Activated B cell treated with CpG ODN at 0.5 μM for 24 hours (primary cell): ENCODE measurements at regions of chr3 and their contacts with region 1.

Region 1: GRCh38 chr3:12891985-12892839 is 50.8 kb upstream of the RPL32 start:
- DNase-seq: no peak
- ATAC-seq: peak; percentile 52
- H3K4me3 Mint-ChIP-seq: no peak overlapping the region
- H3K27ac Mint-ChIP-seq: no peak overlapping the region
- H3K4me1 Mint-ChIP-seq: peaks cover 15% of the 10 kb centered on the region
- H3K27me3 Mint-ChIP-seq: peaks cover 3% of the 10 kb centered on the region
- CTCF ChIP-seq: peak; percentile 89

Region 2: GRCh38 chr3:12706504-12707253 is 185.5 kb before region 1 on chr3:
- CTCF ChIA-PET with region 1: interaction called, 5 read pairs
- POLR2A ChIA-PET with region 1: no interaction called
- intact Hi-C with region 1: loop called (anchors 1 kb)
- DNase-seq: peak; percentile 24
- ATAC-seq: peak; percentile 98
- H3K4me3 Mint-ChIP-seq: no peak overlapping the region
- H3K27ac Mint-ChIP-seq: no peak overlapping the region
- H3K4me1 Mint-ChIP-seq: no peaks in the 10 kb centered on the region
- H3K27me3 Mint-ChIP-seq: peaks cover 3% of the 10 kb centered on the region
- CTCF ChIP-seq: no peak

Region 3: DNA sequence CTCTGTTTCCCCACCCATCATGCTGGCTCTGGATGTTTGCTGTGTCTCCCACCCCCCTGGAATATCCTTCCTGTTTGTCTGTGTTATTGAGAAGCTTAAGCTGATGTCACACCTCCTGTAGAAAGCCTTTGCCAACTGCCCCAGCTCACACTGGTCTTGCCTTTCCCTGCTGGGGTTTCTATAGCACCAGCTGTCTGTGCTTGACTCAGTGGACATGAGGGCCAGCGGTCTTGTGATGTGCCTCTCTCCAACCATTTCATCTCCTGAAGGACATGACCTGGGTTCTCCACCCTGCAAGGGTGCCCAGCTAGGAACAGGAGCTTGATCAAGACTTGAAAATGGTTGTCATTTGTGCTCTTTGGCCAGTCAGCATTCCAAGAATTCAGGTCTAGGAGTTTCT is 147.9 kb before region 1 on chr3:
- CTCF ChIA-PET with region 1: no interaction called
- POLR2A ChIA-PET with region 1: interaction called, 12 read pairs
- intact Hi-C with region 1: no loop called
- DNase-seq: no peak
- ATAC-seq: no peak
- H3K4me3 Mint-ChIP-seq: no peak overlapping the region
- H3K27ac Mint-ChIP-seq: no peak overlapping the region
- H3K4me1 Mint-ChIP-seq: peaks cover 12% of the 10 kb centered on the region
- H3K27me3 Mint-ChIP-seq: peaks cover 11% of the 10 kb centered on the region
- CTCF ChIP-seq: no peak

Region 4: GRCh38 chr3:12782172-12782815 is 109.9 kb before region 1 on chr3:
- CTCF ChIA-PET with region 1: no interaction called
- POLR2A ChIA-PET with region 1: no interaction called
- intact Hi-C with region 1: loop called (anchors 1 kb)
- DNase-seq: no peak
- ATAC-seq: no peak
- H3K4me3 Mint-ChIP-seq: no peak overlapping the region
- H3K27ac Mint-ChIP-seq: no peak overlapping the region
- H3K4me1 Mint-ChIP-seq: no peaks in the 10 kb centered on the region
- H3K27me3 Mint-ChIP-seq: peaks cover 25% of the 10 kb centered on the region
- CTCF ChIP-seq: no peak

Region 5: DNA sequence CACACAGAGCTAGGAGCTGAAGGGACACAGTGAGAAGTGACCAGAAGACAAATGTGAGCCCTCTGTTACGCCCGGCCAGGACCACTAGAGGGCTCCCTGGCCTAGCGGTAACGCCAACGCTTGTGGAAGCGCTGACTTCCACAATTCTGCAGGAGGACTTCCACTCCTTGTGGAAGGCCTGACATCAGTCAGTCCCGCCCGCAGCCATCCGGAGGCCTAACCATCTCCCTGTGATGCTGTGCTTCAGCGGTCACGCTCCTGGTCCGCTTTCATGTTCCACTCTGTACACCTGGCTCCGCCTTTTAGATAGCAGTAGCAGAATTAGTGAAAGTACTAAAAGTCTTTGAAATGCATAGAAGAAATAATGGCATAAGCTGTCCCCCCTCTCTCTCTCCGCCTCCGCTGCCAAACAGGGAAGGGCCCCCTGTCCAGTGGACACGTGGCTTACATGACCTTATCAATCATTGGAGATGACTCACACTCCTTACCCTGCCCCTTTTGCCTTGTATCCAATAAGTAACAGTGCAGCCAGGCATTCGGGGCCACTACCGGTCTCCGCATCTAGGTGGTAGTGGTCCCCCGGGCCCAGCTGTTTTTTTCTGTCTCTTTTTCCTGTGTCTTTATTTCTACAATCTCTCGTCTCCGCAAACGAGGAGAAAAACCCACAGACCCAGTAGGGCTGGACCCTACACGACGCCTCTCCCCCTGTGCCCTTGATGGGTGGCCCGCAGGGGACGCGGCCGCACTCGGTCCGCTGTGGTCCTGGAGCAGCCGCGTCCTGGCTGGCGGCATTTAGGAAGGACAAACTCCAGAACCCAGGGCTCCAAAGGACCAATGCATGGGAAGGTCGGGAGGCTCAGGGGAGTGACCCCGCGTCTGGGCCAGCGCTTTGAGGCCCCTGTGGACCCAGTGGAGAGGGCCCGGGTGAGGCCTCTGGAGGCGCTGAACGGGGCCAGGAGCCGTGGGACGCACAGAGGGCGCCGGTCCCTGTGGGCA is 23.9 kb before region 1 on chr3:
- CTCF ChIA-PET with region 1: interaction called, 50 read pairs
- POLR2A ChIA-PET with region 1: interaction called, 7 read pairs
- intact Hi-C with region 1: loop called (anchors 1 kb)
- DNase-seq: peak; percentile 59
- ATAC-seq: peak; percentile 81
- H3K4me3 Mint-ChIP-seq: peak overlapping the region; percentile 79
- H3K27ac Mint-ChIP-seq: peak overlapping the region; percentile 25
- H3K4me1 Mint-ChIP-seq: peaks cover 25% of the 10 kb centered on the region
- H3K27me3 Mint-ChIP-seq: peaks cover 3% of the 10 kb centered on the region
- CTCF ChIP-seq: peak; percentile 67

Region 6: DNA sequence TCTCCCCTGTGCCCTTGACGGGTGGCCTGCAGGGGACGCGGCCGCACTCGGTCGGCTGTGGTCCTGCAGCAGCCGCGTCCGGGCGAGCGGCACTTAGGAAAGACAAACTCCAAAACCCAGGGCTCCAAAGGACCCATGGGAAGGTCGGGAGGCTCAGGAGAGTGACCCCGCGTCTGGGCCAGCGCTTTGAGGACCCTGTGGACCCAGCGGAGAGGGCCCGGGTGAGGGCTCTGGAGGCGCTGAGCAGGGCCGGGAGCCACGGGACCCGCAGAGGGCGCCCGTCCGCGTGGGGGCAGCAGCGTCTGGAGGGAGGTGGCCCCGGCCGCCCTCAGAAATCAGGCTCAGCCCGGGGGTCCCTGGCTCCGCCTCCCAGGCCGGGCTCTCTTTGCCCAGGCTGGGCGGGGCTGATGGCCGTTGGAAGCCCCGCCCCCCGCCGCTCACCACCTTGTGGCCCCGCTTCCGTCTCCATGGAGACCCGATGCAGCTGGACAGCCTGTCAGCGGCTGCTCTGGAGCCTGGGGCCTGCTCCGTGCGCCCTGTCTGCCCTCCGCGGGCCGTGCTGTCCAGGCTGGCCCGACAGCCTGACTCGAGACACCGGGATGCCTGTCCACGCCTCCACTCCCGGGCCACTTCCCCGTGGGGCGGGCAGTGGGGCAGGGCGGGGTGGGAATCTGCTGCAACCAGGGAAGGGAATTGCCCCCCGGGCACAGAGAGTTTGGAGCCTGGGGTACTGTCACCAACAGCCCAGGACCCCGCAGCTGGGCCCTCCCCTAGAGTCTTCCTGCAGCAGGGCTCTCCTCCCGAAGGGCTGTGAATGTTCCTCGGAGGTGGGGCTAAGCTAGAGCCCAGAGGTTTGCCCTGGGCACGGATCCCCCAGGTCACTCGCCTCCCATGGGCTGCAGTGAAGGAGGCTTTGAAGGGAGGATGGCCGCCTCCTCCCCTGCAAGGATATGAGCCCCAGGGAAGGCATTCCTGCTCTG is 16.1 kb before region 1 on chr3:
- CTCF ChIA-PET with region 1: interaction called, 15 read pairs
- POLR2A ChIA-PET with region 1: interaction called, 7 read pairs
- intact Hi-C with region 1: no loop called
- DNase-seq: no peak
- ATAC-seq: peak; percentile 71
- H3K4me3 Mint-ChIP-seq: no peak overlapping the region
- H3K27ac Mint-ChIP-seq: no peak overlapping the region
- H3K4me1 Mint-ChIP-seq: peaks cover 3% of the 10 kb centered on the region
- H3K27me3 Mint-ChIP-seq: peaks cover 7% of the 10 kb centered on the region
- CTCF ChIP-seq: no peak

Region 7: GRCh38 chr3:13353936-13354542 is 461.8 kb after region 1 on chr3:
- CTCF ChIA-PET with region 1: no interaction called
- POLR2A ChIA-PET with region 1: no interaction called
- intact Hi-C with region 1: no loop called
- DNase-seq: no peak
- ATAC-seq: no peak
- H3K4me3 Mint-ChIP-seq: no peak overlapping the region
- H3K27ac Mint-ChIP-seq: no peak overlapping the region
- H3K4me1 Mint-ChIP-seq: peaks cover 20% of the 10 kb centered on the region
- H3K27me3 Mint-ChIP-seq: no peaks in the 10 kb centered on the region
- CTCF ChIP-seq: no peak

Region 8: DNA sequence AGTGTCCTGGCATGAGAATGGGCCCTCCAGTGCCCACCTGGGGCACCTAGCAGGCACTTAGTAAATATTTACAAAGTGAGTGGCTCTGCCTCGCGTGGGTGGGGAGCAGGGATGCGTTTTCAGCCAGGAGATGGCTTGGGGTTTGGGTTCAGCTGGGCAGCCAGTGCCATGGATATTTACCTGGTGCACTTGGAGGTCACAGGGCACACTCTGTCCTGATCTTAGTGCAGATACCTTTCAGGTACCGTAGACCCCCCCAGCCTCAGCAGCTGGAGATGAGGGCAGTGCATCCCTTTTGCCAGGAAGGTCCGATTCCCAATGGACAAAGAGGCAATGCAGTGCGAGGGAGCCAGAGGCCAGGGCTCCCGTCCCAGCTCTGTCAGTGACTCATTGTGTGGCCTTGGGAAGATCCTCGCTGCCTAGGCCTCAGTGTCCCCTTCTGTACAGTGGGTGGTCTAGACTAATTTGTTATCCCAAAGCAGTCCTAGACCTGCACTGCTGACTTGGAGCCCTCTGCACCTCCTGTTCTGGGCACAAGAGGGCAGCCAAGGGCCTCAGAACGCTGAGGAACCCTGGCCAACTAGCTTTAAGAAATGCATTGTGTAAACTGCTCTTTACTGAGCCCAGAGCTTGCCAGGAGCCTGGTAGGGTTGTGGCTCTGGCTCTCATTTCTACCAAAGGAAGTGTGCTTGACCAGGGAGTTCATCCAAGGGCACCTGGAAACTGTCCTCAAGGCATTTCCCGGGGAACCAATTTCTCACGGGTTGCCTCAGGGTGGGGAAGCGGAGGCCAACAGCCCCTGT is 603.9 kb after region 1 on chr3:
- CTCF ChIA-PET with region 1: no interaction called
- POLR2A ChIA-PET with region 1: no interaction called
- intact Hi-C with region 1: no loop called
- DNase-seq: peak; percentile 53
- ATAC-seq: peak; percentile 91
- H3K4me3 Mint-ChIP-seq: no peak overlapping the region
- H3K27ac Mint-ChIP-seq: no peak overlapping the region
- H3K4me1 Mint-ChIP-seq: no peaks in the 10 kb centered on the region
- H3K27me3 Mint-ChIP-seq: peaks cover 1% of the 10 kb centered on the region
- CTCF ChIP-seq: peak; percentile 41